B cell (primary cell): ENCODE measurements at regions of chr7 and their contacts with region 1.

Region 1: DNA sequence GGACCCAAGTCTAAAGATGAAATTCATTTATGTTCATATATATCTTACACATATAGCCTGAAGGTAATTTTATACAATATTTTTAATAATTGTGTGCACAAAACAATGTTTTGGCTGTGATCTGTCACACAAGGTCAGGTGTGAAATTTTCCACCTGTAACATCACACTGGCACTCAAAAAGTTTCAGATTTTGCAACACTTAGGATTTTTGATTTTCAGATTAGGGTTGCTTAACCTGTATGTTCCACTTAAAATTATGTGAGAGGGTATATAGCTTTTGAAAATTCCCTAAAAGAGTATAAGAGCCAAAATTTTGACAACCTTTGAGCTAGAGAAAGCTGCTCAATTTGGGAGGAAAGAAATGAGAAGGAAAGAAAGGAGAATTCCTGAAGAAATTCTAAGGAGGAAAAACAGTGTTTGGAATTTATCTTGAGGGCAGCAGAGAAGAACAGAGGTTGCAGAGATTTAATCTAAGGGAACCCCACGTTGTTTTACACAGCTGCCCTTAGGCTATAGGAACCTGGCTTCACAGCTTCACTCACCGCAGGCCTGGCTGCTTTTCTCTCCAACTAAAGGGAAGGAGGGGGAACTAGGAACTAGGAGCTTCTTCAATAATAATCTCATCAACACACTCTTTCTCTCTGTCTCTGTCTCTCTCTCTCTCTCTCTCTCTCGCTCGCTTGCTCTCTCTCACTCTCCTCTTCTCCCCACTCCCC is 8.6 kb downstream of the VOPP1 start:
- DNase-seq: no peak
- ATAC-seq: no peak
- H3K4me3 ChIP-seq: no peak overlapping the region
- H3K4me3 Mint-ChIP-seq: peak overlapping the region; percentile 74
- H3K27ac ChIP-seq: peak overlapping the region in 1 of 2 donors; percentile 27
- H3K27ac Mint-ChIP-seq: peak overlapping the region; percentile 80
- H3K4me1 ChIP-seq: peaks cover 83 to 90% of the 10 kb centered on the region in 2 donors
- H3K4me1 Mint-ChIP-seq: peaks cover 89% of the 10 kb centered on the region
- H3K27me3 ChIP-seq: no peaks in the 10 kb centered on the region
- H3K27me3 Mint-ChIP-seq: no peaks in the 10 kb centered on the region
- CTCF ChIP-seq: no peak

Region 2: GRCh38 chr7:55546829-55547228 is 16.9 kb before region 1 on chr7:
- CTCF ChIA-PET with region 1: interaction called, 10 read pairs
- POLR2A ChIA-PET with region 1: interaction called, 4 read pairs
- intact Hi-C with region 1: no loop called
- DNase-seq: no peak
- ATAC-seq: peak; percentile 23
- H3K4me3 ChIP-seq: no peak overlapping the region
- H3K4me3 Mint-ChIP-seq: peak overlapping the region; percentile 19
- H3K27ac ChIP-seq: no peak overlapping the region
- H3K27ac Mint-ChIP-seq: peak overlapping the region; percentile 53
- H3K4me1 ChIP-seq: peaks cover 59 to 71% of the 10 kb centered on the region in 2 donors
- H3K4me1 Mint-ChIP-seq: peaks cover 84% of the 10 kb centered on the region
- H3K27me3 ChIP-seq: no peaks in the 10 kb centered on the region
- H3K27me3 Mint-ChIP-seq: no peaks in the 10 kb centered on the region
- CTCF ChIP-seq: no peak